ENCODE measurements at regions of chr2 and their contacts with region 1.

Region 1: DNA sequence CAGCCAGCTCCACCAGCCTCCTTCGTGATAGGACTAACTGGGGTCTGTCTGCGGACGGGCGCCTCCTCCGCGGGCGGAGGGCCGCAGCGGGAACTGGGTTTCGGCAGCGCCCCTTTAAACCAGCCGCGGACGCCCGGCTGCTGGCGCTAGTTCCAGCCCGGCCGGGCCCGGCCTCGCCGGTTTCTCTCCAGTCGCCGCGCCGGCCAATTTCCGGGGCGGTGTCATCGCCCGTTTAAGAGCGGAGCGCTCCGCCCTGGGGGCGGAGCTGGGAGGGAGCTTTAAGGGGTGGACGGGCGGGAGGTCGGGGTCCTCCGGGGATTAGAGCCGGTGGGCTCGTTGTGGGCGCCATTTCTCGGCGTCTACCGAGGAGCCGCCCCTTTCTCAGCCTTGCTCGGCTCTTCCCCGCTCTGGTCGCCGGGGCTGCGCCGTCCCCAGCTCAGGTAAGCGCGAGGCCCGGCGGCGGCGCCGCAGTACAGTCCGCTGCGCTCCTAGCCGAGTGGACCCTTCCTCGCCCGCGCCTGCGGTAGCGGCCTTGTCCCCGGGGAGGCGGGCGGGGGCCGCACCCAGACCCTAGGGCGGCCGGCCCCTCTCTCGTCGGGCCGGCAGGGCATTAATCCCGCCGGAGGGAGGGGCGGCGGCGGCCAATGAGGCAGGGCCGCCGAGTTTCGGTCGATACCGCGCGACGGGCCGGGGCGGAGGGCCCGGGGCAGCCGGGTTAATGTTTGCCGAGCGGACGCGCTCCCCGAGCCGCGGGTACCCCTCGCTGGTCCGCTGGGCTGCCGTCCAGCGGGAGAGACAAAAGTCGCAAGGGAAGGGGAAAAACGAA is at the start of gene EPB41L5:
- DNase-seq: peak; percentile 95
- H3K4me3 ChIP-seq: peak within 1 kb of the TSS; percentile 88 to 98 (median 95)
- H3K27ac ChIP-seq: peak within 1 kb of the TSS; percentile 85 to 94 (median 93)
- H3K4me1 ChIP-seq: peaks cover 7 to 26% (median 20%) of the 10 kb centered on the region in 4 donors
- H3K27me3 ChIP-seq: no peaks in the 10 kb centered on the region
- CTCF ChIP-seq: peak in 1 of 3 experiments; percentile 17
- EP300 ChIP-seq: no peak
- POLR2A ChIP-seq: peak; percentile 40
- total RNA-seq, gene EPB41L5: 16.0 to 30.3 (median 21.6) TPM

Region 2: DNA sequence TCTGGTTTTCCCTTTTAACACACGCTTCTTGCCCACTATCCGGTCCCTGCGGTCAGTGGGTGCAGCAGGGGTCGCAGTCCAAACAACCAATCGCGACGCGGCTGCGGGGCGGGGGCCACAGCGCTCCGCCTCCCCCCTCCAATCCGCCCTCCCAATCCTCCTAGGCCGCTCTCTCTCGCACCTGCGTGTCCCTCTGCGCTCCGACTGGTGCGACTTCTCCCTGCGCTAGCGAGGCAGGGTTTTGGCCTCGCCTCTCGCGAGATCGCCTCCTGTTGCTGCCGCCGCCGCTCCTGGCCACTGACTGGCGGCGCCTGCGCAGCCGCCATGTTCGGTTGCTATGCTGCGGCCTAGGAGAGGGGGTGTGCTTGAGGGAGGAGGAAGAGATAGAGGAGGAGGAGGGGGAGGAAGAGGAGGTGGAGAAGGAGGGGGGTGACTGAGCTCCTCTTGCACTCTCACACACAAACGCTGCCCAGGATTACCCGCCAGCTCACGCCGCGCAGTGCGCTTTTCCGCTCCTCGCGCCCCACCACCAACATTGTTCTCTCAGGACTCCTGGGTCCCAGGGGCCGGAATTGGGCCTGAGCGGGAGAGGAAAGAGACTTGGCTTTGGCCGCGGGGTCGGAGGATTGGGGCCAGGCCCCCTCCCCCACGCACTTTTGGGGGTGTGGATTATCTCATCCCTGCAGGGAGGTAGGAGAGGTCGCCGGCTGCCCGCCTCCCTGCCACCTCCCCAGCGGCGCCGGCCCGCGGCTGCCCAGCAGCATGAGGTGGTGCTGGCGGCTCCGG is 253.3 kb before region 1 on chr2 and contains the start of gene PTPN4:
- intact Hi-C with region 1: loop called (anchors 10 kb)
- DNase-seq: peak; percentile 97
- H3K4me3 ChIP-seq: peak within 1 kb of the TSS; percentile 69 to 91 (median 80)
- H3K27ac ChIP-seq: peak within 1 kb of the TSS; percentile 91 to 94 (median 92)
- H3K4me1 ChIP-seq: peaks cover 14 to 38% (median 31%) of the 10 kb centered on the region in 4 donors
- H3K27me3 ChIP-seq: no peaks in the 10 kb centered on the region
- CTCF ChIP-seq: peak in 2 of 3 experiments; percentile 7 to 22
- EP300 ChIP-seq: no peak
- POLR2A ChIP-seq: no peak
- total RNA-seq, gene PTPN4: 21.3 to 39.9 (median 24.7) TPM

Region 3: DNA sequence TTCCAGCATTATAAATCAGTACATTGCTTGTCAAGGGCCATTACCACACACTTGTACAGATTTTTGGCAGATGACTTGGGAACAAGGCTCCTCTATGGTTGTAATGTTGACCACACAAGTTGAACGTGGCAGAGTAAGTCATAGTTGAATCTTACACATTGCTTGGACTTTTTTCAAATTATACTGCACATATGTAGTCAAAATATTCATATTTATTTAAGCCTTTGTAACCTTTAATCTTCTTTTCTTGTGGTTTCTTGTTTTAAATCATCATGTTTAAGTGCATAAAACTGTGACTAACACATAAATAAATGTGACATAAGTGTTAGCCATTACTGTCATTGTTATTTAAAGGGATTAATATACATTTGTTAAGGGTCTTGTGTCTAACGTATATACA is 52.2 kb before region 1 on chr2:
- intact Hi-C with region 1: no loop called
- DNase-seq: no peak
- H3K4me3 ChIP-seq: no peak overlapping the region
- H3K27ac ChIP-seq: no peak overlapping the region
- H3K4me1 ChIP-seq: no peaks in the 10 kb centered on the region
- H3K27me3 ChIP-seq: no peaks in the 10 kb centered on the region
- CTCF ChIP-seq: no peak
- EP300 ChIP-seq: no peak
- POLR2A ChIP-seq: no peak

Region 4: GRCh38 chr2:120053891-120054290 is 40.9 kb after region 1 on chr2:
- intact Hi-C with region 1: no loop called
- DNase-seq: no peak
- H3K4me3 ChIP-seq: no peak overlapping the region
- H3K27ac ChIP-seq: no peak overlapping the region
- H3K4me1 ChIP-seq: no peaks in the 10 kb centered on the region
- H3K27me3 ChIP-seq: no peaks in the 10 kb centered on the region
- CTCF ChIP-seq: no peak
- EP300 ChIP-seq: no peak
- POLR2A ChIP-seq: no peak

Region 5: GRCh38 chr2:120223034-120223912 is 210.3 kb after region 1 on chr2 and contains the start of gene TMEM185B:
- intact Hi-C with region 1: loop called (anchors 10 kb)
- DNase-seq: peak; percentile 98
- H3K4me3 ChIP-seq: peak within 1 kb of the TSS; percentile 69 to 83 (median 74)
- H3K27ac ChIP-seq: peak within 1 kb of the TSS; percentile 89 to 94 (median 92)
- H3K4me1 ChIP-seq: peaks cover 24 to 48% (median 39%) of the 10 kb centered on the region in 4 donors
- H3K27me3 ChIP-seq: no peaks in the 10 kb centered on the region
- CTCF ChIP-seq: peak in 1 of 3 experiments; percentile 26
- EP300 ChIP-seq: no peak
- POLR2A ChIP-seq: peak; percentile 25
- total RNA-seq, gene TMEM185B: 21.6 to 33.8 (median 31.9) TPM

Measured in esophagus muscularis mucosa (tissue), 4 donors.